ENCODE measurements at regions of chr19 and their contacts with region 1.

Region 1: DNA sequence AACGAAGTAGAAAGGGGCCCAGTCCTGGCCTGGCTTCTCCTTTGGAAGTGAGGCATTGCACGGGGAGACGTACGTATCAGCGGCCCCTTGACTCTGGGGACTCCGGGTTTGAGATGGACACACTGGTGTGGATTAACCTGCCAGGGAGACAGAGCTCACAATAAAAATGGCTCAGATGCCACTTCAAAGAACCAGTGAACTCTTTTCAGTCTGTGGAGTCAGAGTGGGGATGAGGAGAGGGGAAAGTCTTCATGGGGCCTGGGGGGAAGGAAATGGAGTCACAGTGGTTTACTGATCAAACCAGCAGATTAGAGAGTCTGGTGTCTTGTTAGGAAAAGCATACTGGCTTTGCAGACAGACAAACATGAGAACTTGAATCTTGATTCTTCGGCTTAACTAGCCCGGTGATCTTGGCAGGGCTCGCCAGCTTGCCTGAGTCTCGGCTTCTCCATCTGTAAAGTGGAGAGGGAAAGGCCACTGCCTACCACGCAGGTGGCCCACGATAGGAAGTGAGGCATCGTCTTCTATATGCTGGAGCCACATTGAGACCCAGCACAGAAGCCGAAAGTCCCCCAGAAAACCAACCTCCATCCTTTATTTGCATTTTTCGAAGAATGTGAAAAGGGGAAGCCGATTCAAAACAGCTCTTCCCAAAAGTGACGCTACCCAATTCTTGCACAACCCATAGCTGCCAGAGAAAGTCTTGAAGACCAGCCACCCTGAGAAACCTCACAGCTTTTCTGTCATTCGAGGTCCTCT is at the start of gene FFAR1:
- DNase-seq: peak; percentile 80
- ATAC-seq: peak; percentile 71
- H3K4me3 Mint-ChIP-seq: peak within 1 kb of the TSS; percentile 56
- H3K27ac Mint-ChIP-seq: peak within 1 kb of the TSS; percentile 99
- H3K4me1 Mint-ChIP-seq: peaks cover 31% of the 10 kb centered on the region
- H3K27me3 Mint-ChIP-seq: peaks cover 1% of the 10 kb centered on the region
- CTCF ChIP-seq: no peak
- total RNA-seq, gene FFAR1: not detected

Region 2: DNA sequence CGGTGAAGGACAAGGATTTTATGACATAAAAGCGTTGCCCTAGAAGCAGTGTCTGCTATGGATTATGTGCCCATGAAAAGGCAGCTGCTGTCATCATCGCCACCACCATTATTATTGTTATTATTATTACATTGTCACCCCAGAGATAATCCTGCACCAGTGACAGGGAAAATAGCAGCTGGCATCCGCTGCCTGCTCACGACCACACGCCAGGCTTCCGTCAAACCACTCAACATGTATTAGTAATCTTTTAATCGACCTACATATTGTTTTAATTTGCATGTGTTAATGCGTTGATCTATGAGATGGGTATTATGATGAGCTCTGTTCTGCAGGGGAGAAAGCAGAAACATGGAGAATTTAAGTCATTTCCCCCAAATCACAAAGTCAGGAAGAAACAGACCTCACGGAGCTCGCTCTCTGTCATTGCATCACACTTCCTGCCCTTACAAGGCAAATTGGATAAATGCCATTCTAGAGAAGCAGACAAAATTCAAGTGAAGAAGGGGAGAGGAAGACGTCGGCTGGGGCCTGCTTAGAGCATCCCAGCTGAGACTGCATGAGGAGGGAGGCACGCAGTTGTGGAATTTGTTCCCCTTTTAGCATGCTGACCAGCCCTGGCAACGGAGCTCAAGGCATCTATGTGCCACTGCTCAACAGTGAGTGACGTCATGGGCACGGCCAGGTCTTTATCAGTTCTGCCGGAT is 10.7 kb after region 1 on chr19 and contains the start of gene FFAR3:
- CTCF ChIA-PET with region 1: interaction called, 10 read pairs
- POLR2A ChIA-PET with region 1: interaction called, 4 read pairs
- intact Hi-C with region 1: no loop called
- DNase-seq: peak; percentile 32
- ATAC-seq: peak; percentile 38
- H3K4me3 Mint-ChIP-seq: peak within 1 kb of the TSS; percentile 49
- H3K27ac Mint-ChIP-seq: peak within 1 kb of the TSS; percentile 65
- H3K4me1 Mint-ChIP-seq: peaks cover 9% of the 10 kb centered on the region
- H3K27me3 Mint-ChIP-seq: peaks cover 7% of the 10 kb centered on the region
- CTCF ChIP-seq: no peak
- total RNA-seq, gene FFAR3: 1.1 to 1.2 TPM